ENCODE measurements at regions of chr19 and their contacts with region 1.

Region 1: DNA sequence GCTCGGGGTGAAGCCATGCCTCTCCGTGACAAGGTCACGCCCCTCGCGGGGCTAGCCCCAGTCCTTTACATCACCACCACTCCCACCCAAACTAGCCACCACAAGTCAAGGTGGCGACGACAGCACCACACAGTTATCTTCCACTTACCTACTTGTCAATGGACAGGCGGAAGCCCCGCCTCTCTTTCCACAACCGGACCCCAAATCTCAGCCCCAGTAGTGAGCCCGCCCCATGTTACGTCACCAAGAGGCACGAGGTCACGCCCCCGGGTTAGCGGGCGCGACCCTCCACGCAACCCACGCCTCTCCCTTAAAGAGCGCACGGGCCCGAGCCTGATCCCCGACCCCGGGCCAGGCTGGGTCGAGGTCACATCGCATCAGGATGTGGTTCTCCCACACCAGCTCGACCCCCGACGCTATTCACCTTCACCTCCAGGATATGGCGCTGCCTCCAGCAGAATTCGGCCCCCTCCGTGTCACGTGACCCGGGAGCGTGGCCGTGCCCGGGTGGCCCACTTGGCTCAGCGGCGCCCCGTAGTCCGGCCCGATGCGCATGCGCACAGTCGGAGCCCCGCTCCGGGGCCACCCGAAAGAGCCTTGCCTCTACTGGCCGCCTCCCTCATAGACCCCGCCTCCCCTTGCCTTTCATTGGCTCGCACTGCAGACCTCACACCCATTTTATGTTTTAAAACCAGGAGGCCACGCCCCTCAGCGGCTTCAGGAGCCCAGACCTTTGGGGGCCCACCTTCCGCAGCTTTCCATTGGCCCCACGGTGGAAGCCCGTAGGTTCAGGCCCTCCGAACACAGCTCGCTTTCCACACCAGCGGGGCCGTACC is 18.2 kb downstream of the SYDE1 start:
- DNase-seq: peak; percentile 95 to 98
- ATAC-seq: peak; percentile 94 to 95
- H3K4me3 ChIP-seq: peak overlapping the region; percentile 78 to 85 (median 84)
- H3K27ac ChIP-seq: peak overlapping the region; percentile 89 to 95 (median 93)
- H3K4me1 ChIP-seq: peaks cover 13 to 15% of the 10 kb centered on the region in 2 donors
- H3K27me3 ChIP-seq: no peaks in the 10 kb centered on the region
- CTCF ChIP-seq: peak in 2 of 5 experiments; percentile 35 to 48
- POLR2A ChIP-seq: peak; percentile 40 to 42

Region 2: DNA sequence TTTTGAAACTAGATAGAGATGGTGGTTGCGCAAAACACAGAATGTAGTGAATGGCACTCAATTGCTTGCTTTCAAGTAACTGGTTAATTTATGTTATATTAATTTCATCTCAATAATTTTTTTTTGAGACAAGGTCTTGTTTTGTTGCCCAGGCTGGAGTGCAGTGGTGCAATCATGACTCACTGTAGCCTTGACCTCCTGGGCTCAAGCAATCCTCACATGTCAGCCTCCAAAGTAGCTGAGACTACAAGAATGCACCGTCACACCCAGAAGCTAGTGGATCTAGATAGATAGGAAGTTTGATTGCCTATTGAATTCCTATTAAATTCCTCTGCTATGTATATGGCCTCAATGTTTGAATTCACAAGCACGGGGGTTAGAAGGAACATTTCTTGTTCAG is 320.7 kb before region 1 on chr19:
- in situ Hi-C with region 1: no loop called
- intact Hi-C with region 1: no loop called
- DNase-seq: no peak
- ATAC-seq: no peak
- H3K4me3 ChIP-seq: no peak overlapping the region
- H3K27ac ChIP-seq: no peak overlapping the region
- H3K4me1 ChIP-seq: no peaks in the 10 kb centered on the region
- H3K27me3 ChIP-seq: no peaks in the 10 kb centered on the region
- CTCF ChIP-seq: no peak
- POLR2A ChIP-seq: no peak

Region 3: DNA sequence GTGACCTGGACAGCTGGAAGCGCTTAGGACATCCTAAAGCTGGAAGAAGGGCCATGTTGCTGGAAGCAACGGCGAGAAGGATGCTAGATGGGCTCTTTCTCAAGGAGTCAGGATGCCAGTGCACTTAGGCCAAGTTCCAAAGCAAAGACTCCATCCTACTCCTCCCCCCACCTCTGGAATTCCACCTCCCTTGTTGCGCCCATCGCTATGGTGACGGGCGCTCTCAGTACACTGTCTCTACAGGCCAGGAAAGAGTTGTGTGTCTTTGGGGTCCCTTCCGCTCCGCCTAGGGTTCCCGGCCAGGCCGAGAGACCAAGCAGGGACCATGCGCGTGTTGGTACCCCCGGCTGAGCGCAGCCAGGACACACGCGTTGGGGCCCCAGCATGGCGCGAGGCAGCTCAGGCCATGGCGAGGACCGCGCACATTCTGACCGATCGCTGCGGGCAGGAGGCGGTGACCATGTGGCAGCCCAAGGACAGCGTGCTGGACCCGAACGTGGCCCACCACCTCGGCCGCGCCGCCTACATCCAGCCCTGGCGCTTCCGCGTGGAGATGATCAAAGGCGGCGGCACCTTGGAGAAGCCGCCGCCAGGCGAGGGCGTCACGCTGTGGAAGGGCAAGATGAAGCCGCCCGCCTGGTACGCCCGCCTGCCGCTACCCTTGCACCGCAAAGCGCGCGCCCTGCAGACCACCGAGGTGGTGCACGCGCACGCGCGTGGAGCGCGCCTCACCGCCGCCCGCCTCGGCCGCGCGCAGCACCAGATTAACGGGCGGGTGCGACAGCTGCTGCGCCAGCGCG is 114.7 kb before region 1 on chr19:
- in situ Hi-C with region 1: no loop called
- intact Hi-C with region 1: no loop called
- DNase-seq: no peak
- ATAC-seq: no peak
- H3K4me3 ChIP-seq: no peak overlapping the region
- H3K27ac ChIP-seq: no peak overlapping the region
- H3K4me1 ChIP-seq: no peaks in the 10 kb centered on the region
- H3K27me3 ChIP-seq: no peaks in the 10 kb centered on the region
- CTCF ChIP-seq: no peak
- POLR2A ChIP-seq: no peak

Region 4: GRCh38 chr19:16111160-16111908 is 985.9 kb after region 1 on chr19 and contains the start of gene RAB8A:
- in situ Hi-C with region 1: no loop called
- intact Hi-C with region 1: loop called (anchors 5 kb)
- DNase-seq: peak; percentile 98 to 99
- ATAC-seq: peak; percentile 96 to 97
- H3K4me3 ChIP-seq: peak within 1 kb of the TSS; percentile 87 to 96 (median 90)
- H3K27ac ChIP-seq: peak within 1 kb of the TSS; percentile 90 to 95 (median 94)
- H3K4me1 ChIP-seq: peaks cover 11 to 20% of the 10 kb centered on the region in 2 donors
- H3K27me3 ChIP-seq: no peaks in the 10 kb centered on the region
- CTCF ChIP-seq: peak; percentile 92 to 99 (median 99)
- POLR2A ChIP-seq: no peak
- total RNA-seq, gene RAB8A: 8.3 to 12.1 (median 9.2) TPM

Measured in gastrocnemius medialis (tissue), 4 donors.